AG04449 (cell line): ENCODE measurements at regions of chr1 and their contacts with region 1.

Region 1: DNA sequence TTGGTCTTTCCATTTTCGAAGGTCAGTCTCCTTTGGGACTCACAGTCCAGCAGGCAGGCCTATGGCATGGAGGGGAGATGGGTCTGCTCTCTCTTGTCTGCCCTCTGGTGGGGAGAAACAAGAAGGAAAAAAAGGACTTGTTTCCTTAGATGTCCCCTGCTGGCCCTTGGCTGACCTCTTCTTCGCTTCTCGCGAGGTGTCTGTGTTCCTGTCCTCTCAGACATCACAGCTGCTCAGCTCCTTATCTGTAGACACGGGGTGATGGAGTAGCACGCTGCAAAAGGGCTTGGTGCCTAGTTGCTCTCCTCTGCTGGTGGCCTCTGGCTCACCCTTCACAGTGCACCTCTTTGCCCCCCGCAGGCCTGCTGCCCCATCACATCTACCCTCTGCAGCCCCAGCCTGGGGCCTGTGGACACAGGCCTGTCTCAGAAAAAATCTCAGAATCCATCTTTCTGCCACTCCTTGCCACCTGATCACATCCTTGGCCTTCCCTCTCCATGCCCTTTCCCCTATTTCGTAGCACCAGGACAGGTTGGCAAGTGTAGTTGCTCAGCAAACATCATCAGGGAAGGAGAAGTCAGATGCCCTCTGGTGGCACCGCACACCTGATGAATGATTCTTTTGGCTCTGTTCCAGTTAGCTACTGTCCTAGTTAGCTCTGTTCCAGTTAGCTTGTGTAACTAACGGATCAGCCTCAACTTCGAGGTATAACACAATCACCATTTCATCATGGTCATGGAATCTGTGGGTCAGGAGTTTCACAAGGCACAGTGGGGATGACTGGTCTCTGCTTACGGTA is 18.7 kb upstream of the AK2 start:
- DNase-seq: peak; percentile 52
- H3K4me3 ChIP-seq: no peak overlapping the region
- CTCF ChIP-seq: peak; percentile 74

Region 2: DNA sequence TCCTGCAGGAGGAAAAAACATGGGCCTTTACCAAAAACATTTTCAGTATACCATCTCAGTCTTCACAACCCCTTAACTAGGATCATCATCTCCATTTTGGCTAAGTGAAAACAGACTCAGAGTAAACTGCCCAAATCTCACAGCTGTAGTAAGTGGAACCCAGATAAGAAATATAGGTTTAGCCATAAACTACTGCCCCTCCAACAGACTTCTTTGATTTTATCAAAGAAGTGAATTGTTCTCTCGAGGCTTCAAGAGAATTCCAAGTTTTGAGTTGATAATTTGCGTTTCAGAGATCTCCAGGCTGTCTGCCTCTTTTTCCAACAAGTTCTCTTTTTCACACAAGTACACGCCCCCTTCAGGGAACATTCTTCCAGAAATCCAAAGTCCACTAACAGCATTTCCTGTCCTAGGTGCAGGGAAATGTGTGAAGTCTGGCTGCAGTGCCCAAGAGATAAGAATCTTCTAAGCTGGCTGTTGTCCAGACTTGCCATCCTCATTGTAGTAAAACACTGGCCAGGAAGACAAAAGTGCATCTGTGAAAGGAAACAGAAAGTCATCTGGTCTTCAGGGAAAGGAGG is 121.6 kb before region 1 on chr1:
- CTCF ChIA-PET with region 1: interaction called, 147 read pairs
- POLR2A ChIA-PET with region 1: no interaction called
- DNase-seq: no peak
- H3K4me3 ChIP-seq: no peak overlapping the region
- CTCF ChIP-seq: no peak

Region 3: GRCh38 chr1:32939655-32940371 is 115.6 kb before region 1 on chr1:
- CTCF ChIA-PET with region 1: interaction called, 147 read pairs
- POLR2A ChIA-PET with region 1: no interaction called
- DNase-seq: peak; percentile 74
- H3K4me3 ChIP-seq: no peak overlapping the region
- CTCF ChIP-seq: no peak

Region 4: DNA sequence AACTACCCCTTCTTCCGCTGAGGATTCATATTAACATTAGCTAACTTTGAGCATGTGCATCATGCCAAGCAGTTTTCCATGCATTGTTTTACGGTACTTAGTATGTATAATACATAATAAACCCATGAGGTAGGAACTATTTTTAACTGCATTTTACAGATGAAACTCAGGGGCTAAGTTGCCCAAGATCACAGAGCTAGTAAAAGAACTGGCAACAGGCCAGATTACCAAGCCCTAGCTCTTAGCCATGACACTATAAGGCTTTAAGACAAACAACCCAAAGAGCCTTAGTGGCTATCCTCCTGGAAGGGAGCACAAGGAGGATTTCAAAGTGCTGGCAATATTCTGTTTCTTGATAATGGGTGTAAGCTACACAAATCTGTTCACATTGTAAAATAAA is 24.8 kb before region 1 on chr1:
- CTCF ChIA-PET with region 1: interaction called, 12 read pairs
- POLR2A ChIA-PET with region 1: no interaction called
- DNase-seq: no peak
- H3K4me3 ChIP-seq: no peak overlapping the region
- CTCF ChIP-seq: no peak

Region 5: GRCh38 chr1:33045246-33045645 is 10.2 kb before region 1 on chr1:
- CTCF ChIA-PET with region 1: interaction called, 35 read pairs
- POLR2A ChIA-PET with region 1: no interaction called
- DNase-seq: no peak
- H3K4me3 ChIP-seq: no peak overlapping the region
- CTCF ChIP-seq: no peak

Region 6: DNA sequence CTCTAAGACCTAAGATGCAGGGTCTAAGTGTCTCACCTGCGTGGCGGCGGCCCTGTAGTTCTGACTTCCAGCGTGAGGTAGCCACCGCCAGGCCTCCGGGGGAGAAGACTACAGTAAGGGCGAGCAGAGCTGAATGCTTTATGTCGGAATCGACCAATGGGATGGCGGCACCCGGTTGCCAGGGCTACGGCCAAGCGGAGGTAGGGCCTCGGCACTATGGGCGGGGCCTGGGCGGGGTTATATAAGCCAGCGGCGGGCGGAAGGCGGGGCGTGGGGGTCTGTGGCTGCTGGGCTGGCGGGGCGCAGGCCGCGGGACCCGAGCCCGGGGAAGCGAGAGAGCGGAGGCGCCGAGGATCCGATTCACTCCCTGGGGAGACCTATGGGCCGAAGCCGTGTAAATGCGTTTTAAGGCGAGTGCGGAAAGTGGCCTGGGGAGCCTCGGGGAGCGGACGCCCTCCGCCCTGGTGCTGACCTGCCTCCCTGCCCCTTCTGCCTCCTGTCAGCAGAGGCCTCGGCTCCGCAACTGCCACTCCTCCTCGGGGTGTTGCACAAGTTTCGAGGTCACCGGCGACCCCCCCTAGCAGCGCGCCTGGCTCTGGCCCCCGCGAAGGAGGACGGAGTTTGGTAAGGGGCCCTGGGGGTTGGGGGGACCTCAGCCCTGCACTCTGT is 25.6 kb after region 1 on chr1 and contains the start of gene AZIN2:
- CTCF ChIA-PET with region 1: interaction called, 79 read pairs
- POLR2A ChIA-PET with region 1: interaction called, 6 read pairs
- DNase-seq: peak; percentile 60
- H3K4me3 ChIP-seq: peak within 1 kb of the TSS; percentile 79
- CTCF ChIP-seq: no peak

Region 7: DNA sequence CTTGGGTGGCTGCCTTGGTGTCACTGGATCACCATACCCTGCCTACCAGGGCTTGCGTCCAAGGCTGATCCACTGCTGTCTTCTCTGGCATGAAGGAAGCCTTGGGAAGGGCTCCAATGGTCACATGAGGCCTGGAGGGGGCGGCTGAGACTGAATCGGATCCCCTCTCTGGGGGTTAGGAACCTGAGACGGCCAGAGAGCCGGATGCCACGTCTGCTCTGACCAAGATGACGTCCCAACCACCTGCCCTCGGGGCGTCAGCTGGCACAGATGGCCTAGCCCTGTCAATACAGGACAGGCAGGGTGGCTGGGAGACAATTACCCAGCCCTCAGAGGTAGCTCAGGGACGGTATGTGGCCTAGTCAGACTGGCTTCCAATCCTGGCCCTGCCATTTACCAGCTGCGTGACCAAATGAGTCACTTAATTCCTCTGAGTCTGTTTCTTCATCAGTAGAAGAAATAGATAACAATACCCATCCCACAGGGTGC is 121.0 kb after region 1 on chr1:
- CTCF ChIA-PET with region 1: no interaction called
- POLR2A ChIA-PET with region 1: no interaction called
- DNase-seq: no peak
- H3K4me3 ChIP-seq: no peak overlapping the region
- CTCF ChIP-seq: no peak